Vagina (tissue), 2 donors: ENCODE measurements at regions of chr16 and their contacts with region 1.

Region 1: DNA sequence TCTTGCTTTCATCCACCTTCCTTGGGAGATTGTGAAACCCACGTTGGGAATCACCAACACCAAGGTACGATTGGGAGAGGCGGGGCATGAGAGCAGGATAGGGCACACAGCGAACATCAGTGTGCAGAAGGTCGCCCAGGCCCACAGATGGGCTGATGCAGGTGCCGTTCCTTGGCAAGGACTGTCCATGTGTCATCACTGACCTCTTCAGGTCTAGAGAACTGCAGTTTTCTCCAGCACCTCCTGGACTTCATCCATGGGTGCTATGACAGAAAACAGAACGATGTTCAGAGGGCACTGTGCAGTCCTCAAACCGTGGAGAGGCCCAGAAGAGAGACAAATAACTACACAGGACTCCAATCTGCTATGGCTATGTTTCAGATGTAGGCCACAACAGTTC is 23.9 kb upstream of the TAT start:
- DNase-seq: no peak
- H3K4me3 ChIP-seq: no peak overlapping the region
- H3K27ac ChIP-seq: no peak overlapping the region
- H3K4me1 ChIP-seq: no peaks in the 10 kb centered on the region
- H3K27me3 ChIP-seq: no peaks in the 10 kb centered on the region
- CTCF ChIP-seq: no peak
- POLR2A ChIP-seq: no peak

Region 2: DNA sequence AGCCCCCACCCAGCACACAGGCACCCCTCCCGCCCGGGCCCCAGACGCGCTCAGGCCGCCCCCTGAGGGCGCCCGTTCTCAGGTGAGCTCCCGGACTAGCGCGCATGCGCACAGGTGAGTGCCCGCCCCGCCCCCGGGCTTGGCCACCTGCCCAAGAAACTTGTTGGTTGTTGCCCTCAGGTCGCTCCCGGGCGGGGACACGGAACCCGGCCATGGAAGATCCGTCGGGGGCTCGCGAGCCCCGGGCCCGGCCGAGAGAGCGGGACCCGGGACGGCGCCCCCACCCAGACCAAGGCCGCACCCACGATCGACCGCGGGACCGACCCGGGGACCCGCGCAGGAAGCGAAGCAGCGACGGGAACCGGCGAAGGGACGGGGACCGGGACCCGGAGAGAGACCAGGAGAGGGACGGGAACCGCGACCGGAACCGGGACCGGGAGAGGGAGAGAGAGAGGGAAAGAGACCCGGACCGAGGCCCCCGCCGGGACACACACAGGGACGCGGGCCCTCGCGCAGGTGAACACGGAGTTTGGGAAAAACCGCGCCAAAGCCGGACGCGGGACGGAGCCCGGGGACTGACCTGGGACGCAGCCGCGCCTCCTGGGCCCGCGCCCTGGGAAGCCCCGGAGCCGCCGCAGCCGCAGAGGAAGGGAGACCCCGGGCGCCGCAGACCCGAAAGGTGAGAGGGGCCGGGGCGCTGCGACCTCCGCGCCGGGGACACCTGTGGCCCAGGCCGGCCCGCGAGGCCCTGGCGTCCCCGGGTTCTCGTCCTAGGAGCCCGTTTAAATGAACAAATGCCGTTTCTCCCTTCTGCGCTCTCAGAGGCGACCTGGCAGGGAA is 25.4 kb after region 1 on chr16 and contains the start of gene MARVELD3:
- intact Hi-C with region 1: no loop called
- DNase-seq: no peak
- H3K4me3 ChIP-seq: peak within 1 kb of the TSS; percentile 15 to 48
- H3K27ac ChIP-seq: no peak within 1 kb of the TSS
- H3K4me1 ChIP-seq: peaks cover 17% of the 10 kb centered on the region
- H3K27me3 ChIP-seq: peaks cover 3% of the 10 kb centered on the region
- CTCF ChIP-seq: no peak
- POLR2A ChIP-seq: no peak
- total RNA-seq, gene MARVELD3: 4.7 TPM

Region 3: GRCh38 chr16:72818236-72818845 is 1217.5 kb after region 1 on chr16:
- intact Hi-C with region 1: no loop called
- DNase-seq: no peak
- H3K4me3 ChIP-seq: no peak overlapping the region
- H3K27ac ChIP-seq: no peak overlapping the region
- H3K4me1 ChIP-seq: no peaks in the 10 kb centered on the region
- H3K27me3 ChIP-seq: no peaks in the 10 kb centered on the region
- CTCF ChIP-seq: no peak
- POLR2A ChIP-seq: no peak

Region 4: DNA sequence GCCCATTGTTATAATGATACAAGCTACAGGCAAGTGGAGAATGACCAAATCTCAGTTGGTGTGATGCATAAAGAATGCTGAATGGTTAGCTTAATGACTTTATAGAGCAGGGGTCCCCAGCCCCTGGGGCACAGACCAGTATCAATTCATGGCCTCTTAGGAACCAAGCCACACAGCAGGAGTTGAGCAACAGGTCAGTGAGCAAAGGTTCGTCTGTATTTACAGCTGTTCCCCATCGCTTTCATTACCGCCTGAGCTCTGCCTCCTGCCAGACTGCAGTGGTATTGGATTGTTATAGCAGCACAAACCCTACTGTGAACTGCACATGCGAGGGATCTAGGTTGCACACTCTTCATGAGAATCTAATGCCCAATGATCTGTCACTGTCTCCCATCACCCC is 1561.2 kb after region 1 on chr16:
- intact Hi-C with region 1: loop called (anchors 5 kb)
- DNase-seq: no peak
- H3K4me3 ChIP-seq: no peak overlapping the region
- H3K27ac ChIP-seq: no peak overlapping the region
- H3K4me1 ChIP-seq: no peaks in the 10 kb centered on the region
- H3K27me3 ChIP-seq: no peaks in the 10 kb centered on the region
- CTCF ChIP-seq: no peak
- POLR2A ChIP-seq: no peak